Activated CD4-positive, alpha-beta memory T cell treated with anti-CD3 and anti-CD28 coated beads, Interleukin-2, amount 10 ng/mL, durations not matched to agents 7 days and 5 days (primary cell): ENCODE measurements at regions of chr13 and their contacts with region 1.

Region 1: DNA sequence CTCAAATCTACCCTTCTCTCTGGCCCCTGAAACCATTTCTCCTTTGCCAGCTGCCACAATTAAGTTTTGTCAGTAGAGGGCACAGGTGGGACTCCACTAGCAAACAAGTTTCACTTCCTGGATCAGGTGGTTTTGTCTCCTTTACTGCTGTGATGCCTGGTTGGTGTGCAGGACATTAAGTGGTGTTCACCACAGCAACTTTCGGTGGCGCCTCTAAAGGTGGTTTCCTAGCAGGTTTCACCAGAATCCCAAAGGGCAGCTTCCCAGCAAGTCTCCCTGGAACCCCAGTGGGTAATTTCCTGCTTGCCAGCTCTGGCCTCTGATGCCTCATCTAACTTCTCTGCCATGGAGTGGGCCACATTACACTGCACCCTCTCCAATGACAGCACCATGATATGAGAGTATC is 16.6 kb downstream of the MED4 start:
- DNase-seq: peak; percentile 35
- H3K4me3 Mint-ChIP-seq: no peak overlapping the region
- H3K27ac Mint-ChIP-seq: peak overlapping the region; percentile 31
- H3K4me1 Mint-ChIP-seq: peaks cover 10% of the 10 kb centered on the region
- H3K27me3 Mint-ChIP-seq: no peaks in the 10 kb centered on the region

Region 2: GRCh38 chr13:48094781-48095502 is 16.7 kb after region 1 on chr13 and contains the start of gene MED4:
- CTCF ChIA-PET with region 1: interaction called, 33 read pairs
- POLR2A ChIA-PET with region 1: interaction called, 17 read pairs
- DNase-seq: peak; percentile 97
- H3K4me3 Mint-ChIP-seq: peak within 1 kb of the TSS; percentile 93
- H3K27ac Mint-ChIP-seq: peak within 1 kb of the TSS; percentile 82
- H3K4me1 Mint-ChIP-seq: peaks cover 34% of the 10 kb centered on the region
- H3K27me3 Mint-ChIP-seq: peaks cover 3% of the 10 kb centered on the region
- total RNA-seq, gene MED4: 55.2 to 61.1 TPM